Sigmoid colon (tissue), 7 donors: ENCODE measurements at regions of chr2 and their contacts with region 1.

Region 1: GRCh38 chr2:66434679-66435548 is at the start of gene MEIS1:
- DNase-seq: peak; percentile 99
- H3K4me3 ChIP-seq: peak within 1 kb of the TSS; percentile 62 to 87 (median 84)
- H3K27ac ChIP-seq: peak within 1 kb of the TSS; percentile 93 to 99 (median 98)
- H3K4me1 ChIP-seq: peaks cover 0 to 25% (median 17%) of the 10 kb centered on the region in 4 donors
- H3K27me3 ChIP-seq: no peaks in the 10 kb centered on the region
- CTCF ChIP-seq: no peak
- EP300 ChIP-seq: peak in 2 of 4 donors; percentile 35 to 60
- POLR2A ChIP-seq: peak; percentile 93 to 98
- total RNA-seq, gene MEIS1: 108 to 144 (median 128) TPM

Region 2: DNA sequence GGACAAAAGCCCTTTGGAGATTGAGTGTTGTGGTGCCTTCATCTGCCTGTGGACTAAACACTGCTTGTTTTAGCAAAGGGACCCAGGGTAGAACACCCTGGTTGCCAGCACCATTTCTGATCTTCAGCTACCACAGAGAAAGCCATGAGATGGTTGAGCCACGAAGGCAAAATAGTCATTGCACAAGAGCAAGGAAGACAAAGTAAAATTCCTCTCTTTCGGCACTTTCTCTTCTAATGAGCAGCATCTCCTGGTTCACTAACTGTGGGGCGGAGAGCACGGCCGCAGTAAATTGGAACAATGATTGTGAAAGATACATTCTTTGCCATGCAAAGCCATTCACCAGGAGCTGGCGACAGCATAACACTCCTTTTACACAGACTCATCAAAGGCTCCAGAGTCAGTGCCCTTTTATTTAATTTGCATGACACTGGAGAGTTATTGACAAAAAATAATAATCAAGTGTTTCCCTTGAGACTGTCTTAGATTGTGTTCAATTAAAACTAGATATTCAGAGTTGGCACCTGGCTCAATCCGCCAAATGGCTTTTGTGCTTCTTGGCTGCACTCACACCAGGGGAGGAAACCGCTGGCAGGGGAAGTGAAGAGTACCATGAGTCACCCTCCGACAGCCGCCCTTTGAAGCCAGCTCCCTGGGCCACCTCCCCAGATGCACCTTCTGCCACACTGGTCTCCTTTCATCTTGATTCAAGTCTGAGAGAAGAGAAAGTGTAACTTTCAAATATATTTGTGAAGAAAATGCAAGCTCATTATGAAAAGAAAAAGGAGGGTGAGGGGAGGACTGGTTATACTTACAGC is 100.5 kb before region 1 on chr2:
- intact Hi-C with region 1: no loop called
- DNase-seq: no peak
- H3K4me3 ChIP-seq: no peak overlapping the region
- H3K27ac ChIP-seq: no peak overlapping the region
- H3K4me1 ChIP-seq: no peaks in the 10 kb centered on the region
- H3K27me3 ChIP-seq: no peaks in the 10 kb centered on the region
- CTCF ChIP-seq: no peak
- EP300 ChIP-seq: no peak
- POLR2A ChIP-seq: no peak

Region 3: GRCh38 chr2:66477135-66477842 is 42.4 kb after region 1 on chr2:
- intact Hi-C with region 1: no loop called
- DNase-seq: no peak
- H3K4me3 ChIP-seq: no peak overlapping the region
- H3K27ac ChIP-seq: peak overlapping the region; percentile 12 to 68 (median 50)
- H3K4me1 ChIP-seq: peaks cover 0 to 85% (median 65%) of the 10 kb centered on the region in 4 donors
- H3K27me3 ChIP-seq: no peaks in the 10 kb centered on the region
- CTCF ChIP-seq: no peak
- EP300 ChIP-seq: no peak
- POLR2A ChIP-seq: no peak

Region 4: DNA sequence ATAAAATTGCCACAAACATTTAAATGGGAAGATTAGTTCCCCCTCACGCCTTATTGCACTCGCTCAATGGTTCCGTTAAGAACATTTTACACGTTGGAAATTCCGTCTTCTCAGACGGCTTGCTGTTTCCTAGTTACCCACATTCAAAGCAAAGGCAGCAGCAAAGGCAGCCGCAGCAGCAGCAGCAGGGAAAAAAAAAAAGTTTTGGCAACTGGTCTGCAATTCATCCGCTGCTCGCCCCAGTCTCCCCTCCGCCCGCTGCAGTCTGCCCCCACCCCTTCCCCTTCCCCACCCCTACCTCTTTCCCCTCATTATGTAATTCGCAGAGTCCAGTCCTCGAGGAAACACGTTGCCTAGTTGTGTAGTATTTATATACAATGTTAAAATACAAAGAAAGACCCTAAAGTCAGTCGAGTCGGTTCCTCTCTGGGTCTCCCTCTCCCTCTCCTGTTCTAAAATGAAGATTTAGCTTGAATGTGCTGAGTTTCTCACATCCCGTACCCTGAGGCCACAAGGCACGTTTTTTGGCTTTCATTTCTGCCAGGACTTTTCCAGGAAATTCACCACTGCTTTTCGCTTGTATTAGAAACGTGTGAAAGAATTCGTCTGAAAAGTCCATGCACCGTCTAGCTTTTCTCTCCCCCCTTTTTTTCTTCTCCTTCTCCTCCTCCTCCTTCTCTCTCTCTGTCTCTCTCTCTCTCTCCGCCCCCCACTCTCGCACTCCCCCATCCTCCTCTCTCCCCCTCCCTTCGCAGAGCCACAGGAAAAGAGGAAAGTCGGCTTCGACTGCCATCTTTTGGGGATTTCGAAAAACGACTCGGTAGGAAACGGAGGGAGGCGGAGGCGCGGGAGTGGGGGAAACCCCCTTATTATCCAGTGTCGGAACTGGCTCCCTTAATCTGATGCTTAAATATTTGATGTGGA is 140.0 kb after region 1 on chr2:
- intact Hi-C with region 1: loop called (anchors 2 kb)
- DNase-seq: peak; percentile 92
- H3K4me3 ChIP-seq: peak overlapping the region; percentile 52 to 73 (median 68)
- H3K27ac ChIP-seq: peak overlapping the region; percentile 95 to 99 (median 98)
- H3K4me1 ChIP-seq: peaks cover 0 to 58% (median 42%) of the 10 kb centered on the region in 4 donors
- H3K27me3 ChIP-seq: peaks cover 0 to under 1% (median 0%) of the 10 kb centered on the region in 3 donors
- CTCF ChIP-seq: peak in 3 of 4 experiments; percentile 29 to 40 (median 34)
- EP300 ChIP-seq: no peak
- POLR2A ChIP-seq: no peak

Region 5: DNA sequence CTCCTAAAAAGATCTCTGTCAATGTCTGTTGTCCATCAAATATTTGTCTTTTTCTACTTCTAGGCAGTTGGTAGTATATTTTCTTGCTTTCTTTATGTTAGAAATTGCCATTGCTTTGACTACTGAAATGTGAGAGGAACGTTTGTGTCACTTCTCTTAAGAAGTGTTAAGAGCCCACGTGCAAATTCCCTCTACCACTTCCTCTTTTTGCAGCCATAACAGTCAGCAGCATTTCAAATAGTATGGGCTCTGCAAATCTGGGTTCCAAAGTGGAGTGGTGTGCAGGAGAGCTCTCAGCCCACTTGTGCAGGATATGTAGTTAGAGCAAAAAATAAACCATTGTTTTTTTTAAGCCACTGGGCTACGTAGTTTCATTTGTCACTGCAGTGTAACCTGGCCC is 314.0 kb after region 1 on chr2:
- intact Hi-C with region 1: no loop called
- DNase-seq: no peak
- H3K4me3 ChIP-seq: no peak overlapping the region
- H3K27ac ChIP-seq: peak overlapping the region in 3 of 4 donors; percentile 62 to 80 (median 69)
- H3K4me1 ChIP-seq: peaks cover 0 to 56% (median 27%) of the 10 kb centered on the region in 4 donors
- H3K27me3 ChIP-seq: no peaks in the 10 kb centered on the region
- CTCF ChIP-seq: no peak
- EP300 ChIP-seq: no peak
- POLR2A ChIP-seq: no peak

Region 6: GRCh38 chr2:66888791-66889631 is 454.1 kb after region 1 on chr2:
- intact Hi-C with region 1: loop called (anchors 5 kb)
- DNase-seq: peak; percentile 95
- H3K4me3 ChIP-seq: no peak overlapping the region
- H3K27ac ChIP-seq: peak overlapping the region; percentile 27 to 91 (median 83)
- H3K4me1 ChIP-seq: peaks cover 0 to 68% (median 45%) of the 10 kb centered on the region in 4 donors
- H3K27me3 ChIP-seq: no peaks in the 10 kb centered on the region
- CTCF ChIP-seq: no peak
- EP300 ChIP-seq: peak; percentile 97 to 98 (median 98)
- POLR2A ChIP-seq: peak in 1 of 2 donors; percentile 4

Region 7: GRCh38 chr2:67065046-67065445 is 630.1 kb after region 1 on chr2:
- intact Hi-C with region 1: loop called (anchors 10 kb)
- DNase-seq: peak; percentile 84
- H3K4me3 ChIP-seq: no peak overlapping the region
- H3K27ac ChIP-seq: peak overlapping the region; percentile 5 to 72 (median 65)
- H3K4me1 ChIP-seq: peaks cover 0 to 16% (median 14%) of the 10 kb centered on the region in 4 donors
- H3K27me3 ChIP-seq: no peaks in the 10 kb centered on the region
- CTCF ChIP-seq: no peak
- EP300 ChIP-seq: peak in 3 of 4 donors; percentile 22 to 37 (median 29)
- POLR2A ChIP-seq: no peak

Region 8: DNA sequence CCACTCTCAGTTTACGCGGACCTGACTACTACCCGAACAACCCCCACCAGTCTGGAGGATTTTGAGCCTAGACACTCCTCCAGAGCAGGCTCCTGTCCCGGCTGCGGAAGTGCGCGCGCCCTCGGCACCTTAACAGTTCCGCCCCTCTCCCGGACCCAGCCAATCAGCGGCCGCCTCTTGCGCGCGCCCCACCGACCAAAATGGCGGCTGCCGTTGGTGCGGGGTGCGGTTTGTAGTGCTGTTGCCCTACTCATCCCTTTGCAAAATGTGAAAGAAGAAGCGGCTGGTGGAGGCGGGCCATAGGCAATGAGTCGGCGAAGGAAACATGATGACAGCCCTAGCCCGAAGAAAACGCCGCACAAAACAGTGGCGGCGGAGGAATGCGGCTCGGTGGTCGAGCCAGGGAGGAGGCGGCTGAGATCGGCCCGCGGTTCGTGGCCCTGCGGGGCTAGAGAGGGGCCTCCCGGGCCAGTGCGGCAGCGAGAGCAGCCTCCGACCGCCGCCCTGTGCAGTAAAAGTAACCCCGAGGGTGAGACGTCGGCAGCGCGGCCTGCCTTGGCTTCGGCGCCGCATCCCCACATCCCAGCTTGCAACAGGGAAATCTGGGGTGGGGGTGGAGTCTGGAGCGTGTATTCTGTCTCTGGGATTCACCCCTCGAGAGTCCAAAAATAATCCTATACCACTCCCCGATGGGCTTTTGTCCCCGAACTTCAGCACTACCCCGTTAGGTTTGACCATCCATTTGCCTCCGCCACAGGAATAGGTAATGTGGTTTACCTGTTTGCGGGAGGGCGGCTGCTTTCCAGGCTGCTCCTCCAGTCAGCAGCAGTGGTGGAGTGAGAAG is 962.5 kb after region 1 on chr2 and contains the start of gene ETAA1:
- intact Hi-C with region 1: loop called (anchors 10 kb)
- DNase-seq: peak; percentile 97
- H3K4me3 ChIP-seq: peak within 1 kb of the TSS; percentile 76 to 88 (median 83)
- H3K27ac ChIP-seq: peak within 1 kb of the TSS; percentile 90 to 95 (median 94)
- H3K4me1 ChIP-seq: peaks cover 0 to 31% (median 13%) of the 10 kb centered on the region in 4 donors
- H3K27me3 ChIP-seq: no peaks in the 10 kb centered on the region
- CTCF ChIP-seq: no peak
- EP300 ChIP-seq: no peak
- POLR2A ChIP-seq: peak; percentile 77 to 82
- total RNA-seq, gene ETAA1: 12.1 to 20.0 (median 15.8) TPM

Region 9: GRCh38 chr2:67514515-67514914 is 1079.6 kb after region 1 on chr2:
- intact Hi-C with region 1: no loop called
- DNase-seq: no peak
- H3K4me3 ChIP-seq: no peak overlapping the region
- H3K27ac ChIP-seq: peak overlapping the region in 1 of 4 donors; percentile 3
- H3K4me1 ChIP-seq: peaks cover 0 to 8% (median 3%) of the 10 kb centered on the region in 4 donors
- H3K27me3 ChIP-seq: no peaks in the 10 kb centered on the region
- CTCF ChIP-seq: no peak
- EP300 ChIP-seq: no peak
- POLR2A ChIP-seq: no peak